Common myeloid progenitor, CD34-positive (primary cell): ENCODE measurements at regions of chr2 and their contacts with region 1.

Region 1: GRCh38 chr2:46008091-46008870 is 288.9 kb upstream of the EPAS1 start:
- DNase-seq: no peak
- H3K4me3 ChIP-seq: no peak overlapping the region
- H3K27ac ChIP-seq: no peak overlapping the region
- H3K4me1 ChIP-seq: no peaks in the 10 kb centered on the region
- H3K27me3 ChIP-seq: no peaks in the 10 kb centered on the region

Region 2: DNA sequence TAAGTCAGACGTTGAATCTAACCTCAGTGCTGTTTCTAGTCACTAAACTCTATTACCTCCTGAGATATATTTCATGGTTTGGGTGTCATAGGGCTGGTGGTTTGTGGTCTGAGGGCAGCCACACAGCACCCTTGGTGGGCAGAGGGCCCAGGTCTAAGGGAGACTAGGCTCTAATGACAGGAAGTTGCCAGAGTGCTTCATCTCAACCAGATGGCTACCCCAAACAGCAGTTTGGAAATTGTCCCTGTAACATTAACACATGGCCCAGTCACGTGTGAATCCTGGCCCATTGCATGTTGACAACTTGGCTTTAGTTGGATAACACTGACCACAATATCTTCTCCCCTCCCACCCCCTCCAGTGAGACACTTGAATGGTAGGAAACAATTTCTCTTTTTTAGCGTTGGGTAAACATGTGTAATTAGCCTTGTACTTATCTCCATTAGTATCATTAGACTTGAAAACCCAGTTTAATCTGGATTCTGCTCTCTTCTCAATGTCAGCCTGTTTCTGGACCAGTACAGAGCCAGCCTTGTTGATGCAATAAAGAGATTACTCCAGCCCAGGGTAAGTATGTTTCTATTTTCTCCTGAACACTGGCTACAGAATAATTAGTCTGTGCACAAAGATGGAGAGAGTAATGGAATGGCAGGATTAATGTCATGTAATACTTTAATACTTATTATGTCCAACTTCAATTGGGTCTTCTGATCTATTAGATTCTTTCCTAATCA is 1254.6 kb before region 1 on chr2:
- CTCF ChIA-PET with region 1: no interaction called
- POLR2A ChIA-PET with region 1: no interaction called
- DNase-seq: peak; percentile 59 to 92 (median 90)
- H3K4me3 ChIP-seq: no peak overlapping the region
- H3K27ac ChIP-seq: no peak overlapping the region
- H3K4me1 ChIP-seq: peaks cover 0 to 21% (median 16%) of the 10 kb centered on the region in 4 experiments
- H3K27me3 ChIP-seq: peaks cover 0 to 67% (median 42%) of the 10 kb centered on the region in 5 experiments

Region 3: GRCh38 chr2:45993476-45993991 is 14.7 kb before region 1 on chr2:
- CTCF ChIA-PET with region 1: interaction called, 24 read pairs
- POLR2A ChIA-PET with region 1: no interaction called
- DNase-seq: peak; percentile 82 to 93 (median 89)
- H3K4me3 ChIP-seq: no peak overlapping the region
- H3K27ac ChIP-seq: no peak overlapping the region
- H3K4me1 ChIP-seq: peaks cover 0 to 2% (median 0%) of the 10 kb centered on the region in 4 experiments
- H3K27me3 ChIP-seq: no peaks in the 10 kb centered on the region